Right ventricle myocardium superior (tissue), 1 donor: ENCODE measurements at regions of chr19 and their contacts with region 1.

Region 1: DNA sequence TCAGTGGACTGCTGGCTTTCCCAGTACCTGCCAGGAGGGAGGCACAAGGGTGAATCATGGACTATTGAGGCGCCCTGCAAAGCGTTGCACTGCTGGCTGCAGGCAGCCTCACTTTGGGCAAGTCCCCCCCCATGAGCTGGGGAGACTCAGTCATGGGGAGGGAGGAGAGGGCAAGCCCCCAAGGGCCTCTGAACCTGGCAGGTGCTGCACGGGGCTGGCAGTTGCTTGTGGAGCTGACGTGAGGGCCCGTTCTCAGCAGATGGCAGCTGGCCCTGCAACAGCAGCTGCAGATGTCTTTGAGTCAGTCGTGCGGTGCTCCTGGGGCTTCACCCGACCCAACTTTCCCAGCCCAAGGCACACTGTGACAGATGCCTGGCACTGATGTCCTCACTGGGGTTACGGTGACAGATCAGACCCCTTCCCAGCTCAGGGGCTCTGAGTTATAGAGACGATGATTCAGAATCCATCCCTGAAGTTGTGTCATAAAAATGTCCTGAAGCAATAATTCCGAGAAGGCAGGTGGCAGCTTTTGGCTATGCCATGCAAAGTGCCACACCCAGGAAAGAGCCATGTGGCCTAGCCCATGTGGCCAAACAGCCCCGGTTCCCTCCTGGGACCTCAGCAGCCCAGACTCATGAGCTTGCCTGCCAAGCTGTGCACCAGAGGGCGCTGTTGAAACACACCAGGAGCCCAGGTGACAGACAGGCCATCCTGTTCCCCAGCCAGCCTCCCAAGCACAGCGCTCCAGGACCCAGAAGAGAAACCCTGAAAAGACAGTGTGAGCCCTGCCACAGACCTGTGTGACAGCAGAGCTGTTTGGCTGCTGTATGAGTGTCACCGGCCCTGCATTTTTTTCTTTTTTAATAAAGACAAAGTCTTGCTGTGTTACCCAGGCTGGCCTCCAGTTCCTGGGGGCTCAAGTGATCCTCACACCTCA is 53.6 kb upstream of the LDLR start:
- DNase-seq: peak; percentile 95
- ATAC-seq: peak; percentile 96

Region 2: GRCh38 chr19:11125994-11126685 is 90.4 kb after region 1 on chr19:
- intact Hi-C with region 1: loop called (anchors 5 kb)
- DNase-seq: peak; percentile 87
- ATAC-seq: peak; percentile 80